IMR-90 (cell line): ENCODE measurements at regions of chr9 and their contacts with region 1.

Region 1: DNA sequence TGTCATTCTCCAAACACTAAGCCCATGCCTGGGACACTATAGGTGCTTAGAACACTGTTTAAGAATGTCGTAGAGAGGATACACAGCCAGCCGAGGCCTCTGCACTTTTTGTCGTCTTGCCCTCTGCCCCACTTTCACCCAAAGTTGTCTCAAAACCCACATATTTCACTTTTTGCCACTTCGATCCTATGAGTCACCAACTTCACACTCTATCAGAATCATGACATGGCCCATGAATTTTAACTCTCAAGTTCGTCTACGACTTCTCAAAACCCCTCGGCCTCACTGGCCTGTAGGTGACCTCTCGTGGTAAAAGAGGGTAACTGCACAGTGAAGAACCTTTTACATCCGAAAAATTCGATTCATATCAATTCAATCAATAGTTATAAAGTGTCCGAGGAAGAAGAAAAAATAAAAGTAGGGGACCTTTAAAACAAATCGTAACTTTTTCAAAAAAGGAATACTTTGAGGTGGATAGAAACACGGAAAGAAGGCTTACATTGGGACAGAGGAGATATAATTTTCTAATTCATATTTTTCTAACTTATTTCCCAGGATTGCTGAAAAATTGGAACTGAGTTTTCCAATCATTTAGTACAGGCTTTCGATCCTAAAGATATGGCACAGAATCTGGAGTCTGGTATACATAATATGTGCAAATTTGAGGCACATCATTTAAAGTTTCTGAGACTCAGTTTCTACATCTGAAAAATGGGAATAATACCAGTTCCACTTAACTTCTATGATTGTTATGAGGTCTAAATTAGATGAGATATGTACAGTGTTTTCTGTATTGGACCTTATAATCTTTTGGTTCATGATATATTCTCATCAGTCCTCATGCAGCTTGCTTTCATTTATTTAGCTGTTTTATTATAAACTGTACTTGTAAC is 122.6 kb downstream of the APBA1 start:
- DNase-seq: peak; percentile 61
- ATAC-seq: peak; percentile 93
- H3K4me3 ChIP-seq: no peak overlapping the region
- H3K27ac ChIP-seq: no peak overlapping the region
- H3K4me1 ChIP-seq: no peaks in the 10 kb centered on the region
- H3K27me3 ChIP-seq: no peaks in the 10 kb centered on the region
- CTCF ChIP-seq: peak; percentile 81
- POLR2A ChIP-seq: no peak
- RAD21 ChIP-seq: peak; percentile 77

Region 2: GRCh38 chr9:69066955-69067354 is 482.6 kb before region 1 on chr9:
- CTCF ChIA-PET with region 1: no interaction called
- POLR2A ChIA-PET with region 1: no interaction called
- dilution Hi-C with region 1: no loop called
- in situ Hi-C with region 1: loop called (anchors 25 kb)
- intact Hi-C with region 1: no loop called
- DNase-seq: no peak
- ATAC-seq: no peak
- H3K4me3 ChIP-seq: no peak overlapping the region
- H3K27ac ChIP-seq: no peak overlapping the region
- H3K4me1 ChIP-seq: peaks cover 2% of the 10 kb centered on the region; the same call in 1 of the 2 replicates
- H3K27me3 ChIP-seq: no peaks in the 10 kb centered on the region
- CTCF ChIP-seq: no peak
- POLR2A ChIP-seq: no peak
- RAD21 ChIP-seq: no peak

Region 3: GRCh38 chr9:69400454-69400853 is 149.1 kb before region 1 on chr9:
- CTCF ChIA-PET with region 1: no interaction called
- POLR2A ChIA-PET with region 1: no interaction called
- dilution Hi-C with region 1: no loop called
- in situ Hi-C with region 1: no loop called
- intact Hi-C with region 1: no loop called
- DNase-seq: no peak
- ATAC-seq: no peak
- H3K4me3 ChIP-seq: no peak overlapping the region
- H3K27ac ChIP-seq: no peak overlapping the region
- H3K4me1 ChIP-seq: no peaks in the 10 kb centered on the region
- H3K27me3 ChIP-seq: peaks cover 16% of the 10 kb centered on the region
- CTCF ChIP-seq: no peak
- POLR2A ChIP-seq: no peak
- RAD21 ChIP-seq: no peak

Region 4: DNA sequence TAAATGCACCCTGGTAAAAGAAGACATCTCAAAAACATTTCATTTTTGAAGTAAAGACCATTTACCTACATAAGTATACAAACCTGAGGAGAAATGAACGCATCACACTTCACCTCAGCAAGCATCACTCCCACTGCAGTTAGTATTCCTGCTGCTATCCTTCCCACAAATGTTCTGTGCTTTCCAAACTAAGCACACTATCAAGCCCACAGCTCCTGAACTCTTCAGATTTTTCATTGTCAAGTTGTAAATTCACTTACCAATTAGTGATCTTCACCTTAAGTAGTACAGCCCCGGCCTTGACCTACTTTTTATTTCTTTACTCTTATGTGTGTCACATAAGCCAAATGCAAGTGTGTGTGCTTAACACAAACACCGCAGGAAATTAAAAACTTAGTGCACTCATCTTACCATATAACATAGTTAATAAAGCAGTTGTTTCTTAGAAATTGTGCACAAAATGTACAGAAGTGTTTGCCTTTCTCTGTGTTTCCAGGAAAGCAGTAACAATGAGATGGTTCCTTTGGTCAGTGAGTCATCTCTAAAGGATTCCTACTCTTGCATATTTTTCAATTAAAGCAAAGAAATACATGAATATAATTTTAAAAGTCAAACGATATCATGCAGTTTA is 46.8 kb before region 1 on chr9:
- CTCF ChIA-PET with region 1: no interaction called
- POLR2A ChIA-PET with region 1: no interaction called
- dilution Hi-C with region 1: no loop called
- in situ Hi-C with region 1: no loop called
- intact Hi-C with region 1: no loop called
- DNase-seq: peak; percentile 41
- ATAC-seq: peak; percentile 78
- H3K4me3 ChIP-seq: no peak overlapping the region
- H3K27ac ChIP-seq: no peak overlapping the region
- H3K4me1 ChIP-seq: no peaks in the 10 kb centered on the region
- H3K27me3 ChIP-seq: no peaks in the 10 kb centered on the region
- CTCF ChIP-seq: no peak
- POLR2A ChIP-seq: no peak
- RAD21 ChIP-seq: no peak

Region 5: GRCh38 chr9:69877854-69878514 is 328.4 kb after region 1 on chr9:
- CTCF ChIA-PET with region 1: no interaction called
- POLR2A ChIA-PET with region 1: no interaction called
- dilution Hi-C with region 1: no loop called
- in situ Hi-C with region 1: no loop called
- intact Hi-C with region 1: loop called (anchors 2 kb)
- DNase-seq: peak; percentile 52
- ATAC-seq: peak; percentile 89
- H3K4me3 ChIP-seq: no peak overlapping the region
- H3K27ac ChIP-seq: no peak overlapping the region
- H3K4me1 ChIP-seq: peaks cover 2% of the 10 kb centered on the region; the same call in 1 of the 2 replicates
- H3K27me3 ChIP-seq: no peaks in the 10 kb centered on the region
- CTCF ChIP-seq: peak; percentile 79
- POLR2A ChIP-seq: no peak
- RAD21 ChIP-seq: peak; percentile 88